B cell (primary cell): ENCODE measurements at regions of chr15 and their contacts with region 1.

Region 1: DNA sequence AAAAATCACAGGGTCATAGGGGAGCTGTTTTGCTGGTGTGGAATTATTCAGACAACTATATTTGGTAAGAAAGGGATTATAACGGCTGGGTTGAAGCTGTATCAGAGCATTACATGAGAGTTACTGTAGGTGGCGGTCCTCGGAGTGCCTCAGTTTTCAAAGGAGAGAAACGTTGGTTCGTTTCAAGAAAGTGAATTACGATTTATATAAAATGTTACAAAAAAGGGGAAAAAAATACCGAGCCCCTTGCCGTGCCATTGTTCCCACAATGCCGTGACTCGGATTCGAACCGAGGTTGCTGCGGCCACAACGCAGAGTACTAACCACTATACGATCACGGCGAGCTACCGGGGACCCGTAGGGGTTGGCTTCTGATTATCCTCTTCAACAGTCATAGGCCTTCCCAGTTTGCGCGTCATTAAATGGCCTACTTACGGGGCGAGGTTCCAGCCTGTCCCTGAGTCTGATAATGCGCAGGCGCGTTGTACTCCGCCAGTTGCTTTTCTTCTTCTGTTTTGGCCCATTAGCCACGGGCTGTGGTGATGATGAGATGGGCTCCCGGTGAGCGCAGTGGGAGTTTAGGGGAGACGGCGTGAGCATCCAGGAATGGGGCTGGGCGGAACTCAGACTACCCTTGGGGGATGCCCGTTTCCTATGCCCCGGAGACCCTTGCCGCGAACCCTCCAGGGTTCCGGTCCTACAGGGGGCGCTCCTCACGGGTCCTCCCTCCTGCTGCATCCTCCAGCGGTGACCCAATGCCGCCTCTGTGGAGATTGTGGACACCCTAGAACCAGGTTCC is 10.8 kb upstream of the SHF start:
- DNase-seq: peak; percentile 100
- ATAC-seq: peak; percentile 62
- H3K4me3 ChIP-seq: peak overlapping the region; percentile 72 to 95 (median 85)
- H3K4me3 Mint-ChIP-seq: no peak overlapping the region
- H3K27ac ChIP-seq: peak overlapping the region; percentile 96 to 97
- H3K27ac Mint-ChIP-seq: no peak overlapping the region
- H3K4me1 ChIP-seq: peaks cover 11 to 18% of the 10 kb centered on the region in 2 donors
- H3K4me1 Mint-ChIP-seq: peaks cover 10% of the 10 kb centered on the region
- H3K27me3 ChIP-seq: no peaks in the 10 kb centered on the region
- H3K27me3 Mint-ChIP-seq: no peaks in the 10 kb centered on the region
- CTCF ChIP-seq: peak; percentile 68

Region 2: GRCh38 chr15:44728576-44729407 is 469.7 kb before region 1 on chr15:
- CTCF ChIA-PET with region 1: no interaction called
- POLR2A ChIA-PET with region 1: no interaction called
- intact Hi-C with region 1: loop called (anchors 5 kb)
- DNase-seq: peak; percentile 98
- ATAC-seq: peak; percentile 77
- H3K4me3 ChIP-seq: peak overlapping the region; percentile 62 to 94 (median 88)
- H3K4me3 Mint-ChIP-seq: peak overlapping the region; percentile 99
- H3K27ac ChIP-seq: peak overlapping the region; percentile 94 to 95
- H3K27ac Mint-ChIP-seq: peak overlapping the region; percentile 99
- H3K4me1 ChIP-seq: peaks cover 61 to 70% of the 10 kb centered on the region in 2 donors
- H3K4me1 Mint-ChIP-seq: peaks cover 74% of the 10 kb centered on the region
- H3K27me3 ChIP-seq: no peaks in the 10 kb centered on the region
- H3K27me3 Mint-ChIP-seq: no peaks in the 10 kb centered on the region
- CTCF ChIP-seq: no peak

Region 3: GRCh38 chr15:45118131-45118588 is 80.4 kb before region 1 on chr15:
- CTCF ChIA-PET with region 1: interaction called, 6 read pairs
- POLR2A ChIA-PET with region 1: no interaction called
- intact Hi-C with region 1: loop called (anchors 10 kb)
- DNase-seq: peak; percentile 92
- ATAC-seq: peak; percentile 98
- H3K4me3 ChIP-seq: peak overlapping the region in 3 of 5 experiments; percentile 36 to 60 (median 44)
- H3K4me3 Mint-ChIP-seq: peak overlapping the region; percentile 80
- H3K27ac ChIP-seq: no peak overlapping the region
- H3K27ac Mint-ChIP-seq: no peak overlapping the region
- H3K4me1 ChIP-seq: peaks cover 38 to 45% of the 10 kb centered on the region in 2 donors
- H3K4me1 Mint-ChIP-seq: peaks cover 36% of the 10 kb centered on the region
- H3K27me3 ChIP-seq: peaks cover 0 to 70% (median 47%) of the 10 kb centered on the region in 4 experiments
- H3K27me3 Mint-ChIP-seq: peaks cover 69% of the 10 kb centered on the region
- CTCF ChIP-seq: peak; percentile 100

Region 4: DNA sequence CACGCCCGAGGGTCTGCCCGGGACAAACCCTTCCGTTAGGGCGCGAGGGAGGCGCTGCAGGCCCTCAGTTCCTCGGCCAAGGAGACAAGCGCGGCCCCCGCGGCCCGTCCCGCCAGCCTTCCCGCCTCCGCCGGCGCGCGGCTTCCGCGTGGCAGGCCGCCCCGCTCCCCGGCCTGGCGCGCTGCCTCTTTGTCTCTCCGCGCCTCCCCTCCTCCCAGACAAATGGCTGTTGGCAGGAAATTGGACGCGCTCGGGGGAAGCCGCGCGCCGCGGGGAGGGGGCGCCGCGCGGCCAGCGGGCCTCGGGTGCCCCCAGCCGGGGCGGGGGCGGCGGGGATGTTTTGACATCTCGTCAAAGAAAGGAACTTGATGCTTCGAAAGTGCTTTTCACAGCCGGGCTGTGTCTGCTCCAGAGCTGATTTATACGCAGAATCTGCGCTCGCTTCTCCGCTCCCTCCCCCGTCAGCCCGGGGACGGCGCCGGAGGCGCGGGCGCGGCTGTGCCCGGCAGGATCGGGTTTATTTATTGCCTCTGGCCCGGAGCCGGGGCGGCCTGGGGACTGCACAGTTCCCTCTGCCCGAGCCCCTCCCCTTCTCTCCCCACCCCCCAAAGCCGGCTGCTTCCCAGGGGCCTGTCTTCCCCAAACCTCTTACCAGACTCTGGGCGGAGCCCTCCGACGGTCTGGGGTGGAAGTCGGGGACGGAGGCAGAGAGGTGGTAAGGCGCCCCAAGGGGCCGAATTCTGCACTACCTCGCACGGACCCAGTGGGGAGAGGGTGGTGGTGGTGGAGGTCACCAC is 31.5 kb before region 1 on chr15:
- CTCF ChIA-PET with region 1: interaction called, 79 read pairs
- POLR2A ChIA-PET with region 1: interaction called, 28 read pairs
- intact Hi-C with region 1: loop called (anchors 1 kb)
- DNase-seq: peak; percentile 89
- ATAC-seq: peak; percentile 94
- H3K4me3 ChIP-seq: peak overlapping the region; percentile 45 to 84 (median 81)
- H3K4me3 Mint-ChIP-seq: peak overlapping the region; percentile 80
- H3K27ac ChIP-seq: peak overlapping the region; percentile 89 to 96
- H3K27ac Mint-ChIP-seq: peak overlapping the region; percentile 92
- H3K4me1 ChIP-seq: peaks cover 12 to 46% of the 10 kb centered on the region in 2 donors
- H3K4me1 Mint-ChIP-seq: peaks cover 31% of the 10 kb centered on the region
- H3K27me3 ChIP-seq: no peaks in the 10 kb centered on the region
- H3K27me3 Mint-ChIP-seq: no peaks in the 10 kb centered on the region
- CTCF ChIP-seq: peak; percentile 75

Region 5: GRCh38 chr15:45279024-45279698 is 80.6 kb after region 1 on chr15:
- CTCF ChIA-PET with region 1: interaction called, 5 read pairs
- POLR2A ChIA-PET with region 1: interaction called, 3 read pairs
- intact Hi-C with region 1: loop called (anchors 1 kb)
- DNase-seq: peak; percentile 97
- ATAC-seq: peak; percentile 99
- H3K4me3 ChIP-seq: peak overlapping the region; percentile 58 to 88 (median 69)
- H3K4me3 Mint-ChIP-seq: peak overlapping the region; percentile 94
- H3K27ac ChIP-seq: peak overlapping the region; percentile 66 to 68
- H3K27ac Mint-ChIP-seq: peak overlapping the region; percentile 88
- H3K4me1 ChIP-seq: peaks cover 12 to 16% of the 10 kb centered on the region in 2 donors
- H3K4me1 Mint-ChIP-seq: peaks cover 13% of the 10 kb centered on the region
- H3K27me3 ChIP-seq: peaks cover 0 to 5% (median 0%) of the 10 kb centered on the region in 4 experiments
- H3K27me3 Mint-ChIP-seq: peaks cover 9% of the 10 kb centered on the region
- CTCF ChIP-seq: no peak

Region 6: DNA sequence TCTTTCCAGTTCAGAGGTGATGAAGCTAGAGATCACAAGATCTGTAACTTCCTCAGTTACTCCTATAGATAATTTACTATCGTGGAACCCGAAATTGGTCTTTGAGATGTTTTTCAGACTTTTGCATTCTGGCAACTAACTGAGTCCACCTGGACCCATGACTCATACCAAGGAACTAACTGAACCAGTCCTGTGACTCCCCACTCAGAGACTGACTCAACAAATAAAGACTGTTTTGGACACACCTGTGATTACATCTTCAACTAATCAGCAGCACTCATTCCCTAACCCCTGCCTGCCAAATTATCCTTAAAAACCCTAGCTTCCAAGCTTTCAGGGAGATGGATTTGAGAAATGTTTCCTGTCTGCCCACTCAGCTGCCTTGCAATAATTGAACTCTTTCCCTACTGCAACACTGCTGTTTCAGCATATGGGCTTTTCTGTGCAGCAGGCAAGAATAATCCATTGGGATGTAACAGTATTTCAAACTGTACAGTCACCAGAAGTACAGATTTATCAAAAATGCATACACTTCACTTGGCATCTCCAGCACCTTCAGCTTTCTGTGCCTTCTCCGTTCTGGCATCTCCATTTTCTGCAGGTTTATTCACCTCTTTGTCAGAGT is 122.2 kb after region 1 on chr15:
- CTCF ChIA-PET with region 1: no interaction called
- POLR2A ChIA-PET with region 1: no interaction called
- intact Hi-C with region 1: no loop called
- DNase-seq: no peak
- ATAC-seq: no peak
- H3K4me3 ChIP-seq: no peak overlapping the region
- H3K4me3 Mint-ChIP-seq: no peak overlapping the region
- H3K27ac ChIP-seq: no peak overlapping the region
- H3K27ac Mint-ChIP-seq: no peak overlapping the region
- H3K4me1 ChIP-seq: no peaks in the 10 kb centered on the region
- H3K4me1 Mint-ChIP-seq: no peaks in the 10 kb centered on the region
- H3K27me3 ChIP-seq: peaks cover 0 to 2% (median under 1%) of the 10 kb centered on the region in 4 experiments
- H3K27me3 Mint-ChIP-seq: peaks cover 35% of the 10 kb centered on the region
- CTCF ChIP-seq: no peak

Region 7: DNA sequence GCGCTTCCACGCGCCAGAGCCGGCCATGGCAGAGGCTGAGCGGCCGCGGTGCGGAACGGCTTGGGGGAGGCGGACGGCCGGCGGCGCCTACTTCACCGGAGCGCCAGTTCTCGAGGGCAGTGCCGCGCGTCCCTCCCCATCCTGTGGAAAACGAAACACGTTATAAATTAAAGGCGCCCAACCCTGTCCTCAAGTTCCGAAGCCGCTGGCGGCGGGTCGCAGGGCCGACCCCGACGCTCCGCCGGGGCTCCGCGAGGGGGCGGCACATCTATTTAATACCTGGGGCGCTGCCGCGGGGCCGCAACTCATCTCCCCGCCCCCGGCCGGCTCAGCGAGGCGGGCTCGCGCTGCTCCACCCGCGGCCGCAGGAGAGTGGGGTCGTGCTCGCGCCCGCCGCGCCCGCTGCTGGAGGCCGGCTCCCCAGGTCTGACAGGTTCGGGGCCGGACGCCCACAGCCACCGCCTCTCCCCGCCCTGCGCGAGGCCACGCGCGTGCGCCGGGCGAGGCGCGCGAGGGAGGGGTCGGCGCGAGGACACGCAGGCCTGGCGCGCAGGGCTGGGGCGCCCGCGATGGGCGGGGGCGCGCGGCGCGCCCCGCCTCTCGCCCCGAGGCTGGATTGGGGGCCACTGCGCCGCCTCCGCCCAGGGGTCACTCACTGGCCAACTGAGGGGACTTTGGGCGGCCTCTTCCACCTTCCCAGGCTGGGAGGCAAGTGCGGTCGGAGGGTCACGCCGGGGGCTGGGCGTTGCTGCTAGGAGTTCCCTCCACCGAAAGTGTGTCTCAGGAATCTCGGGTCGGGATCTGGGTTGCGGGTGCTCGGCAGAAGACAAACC is 324.0 kb after region 1 on chr15 and contains the start of gene SLC30A4:
- CTCF ChIA-PET with region 1: interaction called, 3 read pairs
- POLR2A ChIA-PET with region 1: interaction called, 5 read pairs
- intact Hi-C with region 1: loop called (anchors 5 kb)
- DNase-seq: peak; percentile 86
- ATAC-seq: peak; percentile 81
- H3K4me3 ChIP-seq: peak within 1 kb of the TSS; percentile 60 to 95 (median 73)
- H3K4me3 Mint-ChIP-seq: peak within 1 kb of the TSS; percentile 94
- H3K27ac ChIP-seq: peak within 1 kb of the TSS; percentile 26 to 64
- H3K27ac Mint-ChIP-seq: peak within 1 kb of the TSS; percentile 92
- H3K4me1 ChIP-seq: peaks cover 26 to 32% of the 10 kb centered on the region in 2 donors
- H3K4me1 Mint-ChIP-seq: peaks cover 43% of the 10 kb centered on the region
- H3K27me3 ChIP-seq: no peaks in the 10 kb centered on the region
- H3K27me3 Mint-ChIP-seq: no peaks in the 10 kb centered on the region
- CTCF ChIP-seq: peak; percentile 71
- total RNA-seq, gene SLC30A4: 9.1 and 11.0 TPM in 2 replicates

Region 8: GRCh38 chr15:45611305-45611704 is 412.8 kb after region 1 on chr15:
- CTCF ChIA-PET with region 1: interaction called, 3 read pairs
- POLR2A ChIA-PET with region 1: no interaction called
- intact Hi-C with region 1: loop called (anchors 10 kb)
- DNase-seq: peak; percentile 57
- ATAC-seq: peak; percentile 39
- H3K4me3 ChIP-seq: no peak overlapping the region
- H3K4me3 Mint-ChIP-seq: no peak overlapping the region
- H3K27ac ChIP-seq: no peak overlapping the region
- H3K27ac Mint-ChIP-seq: no peak overlapping the region
- H3K4me1 ChIP-seq: peaks cover 15 to 17% of the 10 kb centered on the region in 2 donors
- H3K4me1 Mint-ChIP-seq: peaks cover 12% of the 10 kb centered on the region
- H3K27me3 ChIP-seq: no peaks in the 10 kb centered on the region
- H3K27me3 Mint-ChIP-seq: no peaks in the 10 kb centered on the region
- CTCF ChIP-seq: peak; percentile 77

Region 9: DNA sequence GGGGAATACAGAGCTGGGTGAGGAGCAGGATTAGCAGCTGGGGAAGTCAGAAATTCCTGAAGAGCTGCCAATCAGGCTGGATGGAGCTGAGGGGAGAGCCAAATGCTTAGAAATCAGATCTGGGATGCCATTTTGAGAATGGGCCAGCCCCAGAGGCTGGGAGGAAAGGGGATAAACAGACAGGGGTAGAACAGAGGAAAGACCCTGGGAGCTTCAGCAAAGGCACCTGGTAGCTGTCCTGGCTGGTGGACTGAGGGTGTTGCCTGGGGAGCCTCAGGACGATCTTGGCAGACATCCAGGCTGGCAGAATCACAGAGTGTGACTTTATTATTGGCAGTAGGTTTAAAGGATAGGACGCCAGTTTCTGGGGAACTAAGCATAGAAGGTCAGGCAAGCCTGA is 534.1 kb after region 1 on chr15:
- CTCF ChIA-PET with region 1: no interaction called
- POLR2A ChIA-PET with region 1: no interaction called
- intact Hi-C with region 1: no loop called
- DNase-seq: no peak
- ATAC-seq: no peak
- H3K4me3 ChIP-seq: no peak overlapping the region
- H3K4me3 Mint-ChIP-seq: no peak overlapping the region
- H3K27ac ChIP-seq: no peak overlapping the region
- H3K27ac Mint-ChIP-seq: no peak overlapping the region
- H3K4me1 ChIP-seq: no peaks in the 10 kb centered on the region
- H3K4me1 Mint-ChIP-seq: peaks cover 5% of the 10 kb centered on the region
- H3K27me3 ChIP-seq: peaks cover 0 to 13% (median 2%) of the 10 kb centered on the region in 4 experiments
- H3K27me3 Mint-ChIP-seq: peaks cover 33% of the 10 kb centered on the region
- CTCF ChIP-seq: no peak